HepG2 (cell line): ENCODE measurements at regions of chr16 and their contacts with region 1.

Region 1: DNA sequence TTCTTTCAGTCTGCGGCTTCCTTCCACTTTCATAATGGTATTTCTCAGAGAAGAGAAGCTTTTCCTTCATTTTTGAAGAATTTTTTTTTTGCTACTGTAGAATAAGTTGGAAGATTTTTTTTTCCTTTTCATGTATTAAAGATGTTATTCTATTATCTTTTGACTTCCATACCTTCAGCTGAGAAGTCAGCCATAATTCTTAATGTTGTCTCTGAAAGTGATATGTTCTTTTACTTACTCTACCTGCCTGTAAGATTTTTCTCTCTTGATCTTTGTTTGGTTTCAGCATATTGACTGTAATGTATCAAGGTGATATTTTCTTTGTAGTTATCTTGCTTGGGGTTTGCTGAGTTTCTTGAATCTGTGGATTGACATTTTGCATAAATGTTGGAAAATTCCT is 143.5 kb upstream of the TOX3 start:
- DNase-seq: no peak
- ATAC-seq: no peak
- H3K4me3 ChIP-seq: no peak overlapping the region
- H3K27ac ChIP-seq: no peak overlapping the region
- H3K4me1 ChIP-seq: no peaks in the 10 kb centered on the region
- H3K27me3 ChIP-seq: no peaks in the 10 kb centered on the region
- CTCF ChIP-seq: no peak
- EP300 ChIP-seq: no peak
- POLR2A ChIP-seq: no peak
- RAD21 ChIP-seq: no peak

Region 2: DNA sequence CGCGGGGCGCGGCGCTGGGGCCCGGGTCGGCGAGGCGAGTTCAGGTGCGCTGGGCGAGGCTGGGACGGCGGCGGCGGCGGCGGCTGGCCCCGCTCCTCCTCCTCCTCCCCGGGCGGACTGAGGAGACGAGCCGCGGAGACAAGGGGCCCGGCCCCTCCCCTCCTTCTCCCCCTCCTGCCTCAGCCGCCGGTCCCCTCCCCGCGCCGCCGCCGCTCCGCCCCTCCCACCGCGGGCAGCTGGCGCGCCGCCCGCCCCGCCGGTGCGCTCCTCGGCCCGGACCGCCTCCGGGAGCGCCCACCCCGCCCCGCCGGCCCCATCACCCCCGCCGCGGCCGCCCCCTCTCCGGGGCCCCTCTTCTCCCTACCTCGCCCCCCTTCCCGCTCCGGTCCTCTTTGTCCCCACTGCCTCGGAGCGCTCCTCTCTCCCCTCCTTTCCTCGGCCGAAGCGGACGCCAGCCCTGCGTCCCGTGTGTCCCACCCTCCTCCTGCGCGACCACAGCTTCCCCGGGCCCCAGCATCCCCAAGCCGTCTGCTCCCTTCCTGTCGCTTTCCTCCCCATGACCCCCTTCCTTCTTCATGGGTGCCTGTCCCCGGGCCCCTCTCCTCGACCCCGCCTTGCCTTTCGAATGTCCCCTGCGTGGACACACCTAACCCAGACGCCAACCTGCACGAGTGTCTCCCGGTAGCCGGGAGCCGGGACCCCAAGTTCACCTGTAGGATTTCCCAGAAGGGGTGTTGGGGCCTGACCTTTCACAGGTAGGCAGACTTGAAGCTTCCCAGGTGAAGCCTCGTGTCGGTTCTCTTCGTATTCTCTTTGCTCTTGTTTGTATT is 143.2 kb before region 1 on chr16 and contains the start of gene TOX3:
- CTCF ChIA-PET with region 1: no interaction called
- POLR2A ChIA-PET with region 1: no interaction called
- in situ Hi-C with region 1: no loop called
- intact Hi-C with region 1: no loop called
- DNase-seq: no peak
- ATAC-seq: peak; percentile 34
- H3K4me3 ChIP-seq: peak within 1 kb of the TSS; percentile 91 to 96 (median 92)
- H3K27ac ChIP-seq: peak within 1 kb of the TSS; percentile 67
- H3K4me1 ChIP-seq: peaks cover 32% of the 10 kb centered on the region
- H3K27me3 ChIP-seq: no peaks in the 10 kb centered on the region; a peak in 1 of 5 replicates
- CTCF ChIP-seq: no peak
- EP300 ChIP-seq: 0 out of 4 replicates have a peak, but pooled peaks of 1 of the 2 experiments have one; percentile 9
- POLR2A ChIP-seq: peak in 1 of 2 experiments; percentile 60; a peak in 1 of 4 replicates
- RAD21 ChIP-seq: no peak
- total RNA-seq, gene TOX3: 12.1 and 14.5 TPM in 2 replicates

Region 3: DNA sequence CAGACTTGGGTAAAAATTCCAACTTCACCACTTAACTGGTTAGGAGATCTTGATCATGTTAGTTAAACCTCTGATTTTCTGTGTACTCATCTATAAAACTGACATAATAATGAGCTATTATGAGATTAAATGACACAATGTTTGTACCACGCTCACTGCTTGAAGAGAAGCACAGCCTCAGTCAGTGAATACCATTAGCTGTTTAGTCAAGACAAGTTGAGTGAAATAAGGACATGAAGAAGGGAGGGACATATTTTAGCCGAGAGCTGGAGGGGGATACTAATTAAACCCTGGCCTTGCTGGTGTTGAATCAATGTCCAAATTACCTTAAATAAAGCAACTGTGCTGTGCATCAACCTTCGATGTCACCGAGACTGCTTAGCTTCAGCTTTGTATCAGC is 38.4 kb before region 1 on chr16:
- CTCF ChIA-PET with region 1: no interaction called
- POLR2A ChIA-PET with region 1: no interaction called
- in situ Hi-C with region 1: no loop called
- intact Hi-C with region 1: loop called (anchors 1 kb)
- DNase-seq: no peak
- ATAC-seq: no peak
- H3K4me3 ChIP-seq: no peak overlapping the region
- H3K27ac ChIP-seq: no peak overlapping the region
- H3K4me1 ChIP-seq: peaks cover 15% of the 10 kb centered on the region
- H3K27me3 ChIP-seq: no peaks in the 10 kb centered on the region; a peak in 1 of 5 replicates
- CTCF ChIP-seq: no peak
- EP300 ChIP-seq: no peak
- POLR2A ChIP-seq: no peak
- RAD21 ChIP-seq: no peak